Naive thymus-derived CD4-positive, alpha-beta T cell (primary cell): ENCODE measurements at regions of chr20 and their contacts with region 1.

Region 1: GRCh38 chr20:32484958-32485769 is 100.0 kb downstream of the NOL4L start:
- DNase-seq: peak; percentile 60 to 94 (median 91)
- ATAC-seq: peak; percentile 92
- H3K4me3 ChIP-seq: peak overlapping the region; percentile 55
- H3K4me3 Mint-ChIP-seq: peak overlapping the region; percentile 82 to 95 (median 92)
- H3K27ac ChIP-seq: peak overlapping the region; percentile 67
- H3K27ac Mint-ChIP-seq: peak overlapping the region; percentile 80 to 98 (median 88)
- H3K4me1 ChIP-seq: peaks cover 8 to 34% of the 10 kb centered on the region in 2 donors
- H3K4me1 Mint-ChIP-seq: peaks cover 20 to 58% (median 51%) of the 10 kb centered on the region in 7 donors
- H3K27me3 ChIP-seq: no peaks in the 10 kb centered on the region
- H3K27me3 Mint-ChIP-seq: peaks cover 0 to 5% (median 0%) of the 10 kb centered on the region in 5 donors

Region 2: DNA sequence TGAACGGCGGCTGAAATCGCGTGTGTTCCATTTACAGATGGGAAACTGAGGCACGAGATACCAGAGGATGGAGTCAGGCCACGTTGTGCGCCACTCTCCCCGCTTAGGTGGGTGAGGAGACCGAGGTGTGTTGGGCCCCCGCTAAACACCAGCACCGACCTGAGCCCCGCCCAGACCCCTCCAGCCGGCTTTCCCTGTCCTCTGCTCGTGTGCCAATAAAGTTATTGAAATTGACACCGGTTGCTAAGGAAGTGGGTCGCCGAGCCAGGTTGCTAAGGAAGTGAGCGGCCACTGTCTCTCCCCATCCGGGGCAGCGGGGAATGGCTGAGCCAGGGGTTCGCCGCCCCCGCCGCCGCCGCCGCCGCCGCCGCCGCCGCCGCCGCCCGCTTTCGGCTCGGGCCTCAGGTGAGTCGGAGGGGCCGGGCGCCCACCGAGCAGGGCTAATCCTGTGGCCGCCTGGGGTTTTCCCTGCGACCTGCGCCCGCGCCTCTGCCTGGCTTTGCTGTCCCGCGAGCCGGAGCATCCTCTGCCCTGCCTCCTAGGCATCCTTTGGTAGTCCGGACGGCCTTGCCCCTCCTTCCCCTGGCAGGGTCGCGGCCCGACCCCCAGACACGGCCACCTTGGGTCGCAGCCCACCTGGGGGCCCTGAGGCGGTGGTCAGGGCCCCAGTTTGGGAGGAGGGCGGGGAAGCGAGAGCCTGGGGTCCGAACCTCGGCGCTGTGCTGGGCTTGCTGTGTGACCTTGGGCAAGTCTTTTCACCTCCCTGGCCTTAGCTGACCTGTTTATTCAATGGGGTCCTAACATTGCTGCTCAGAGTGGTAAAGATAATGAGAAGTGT is 207.6 kb before region 1 on chr20 and contains the start of gene KIF3B:
- CTCF ChIA-PET with region 1: no interaction called
- POLR2A ChIA-PET with region 1: no interaction called
- intact Hi-C with region 1: loop called in 1 of 2 experiments (anchors 5 kb)
- DNase-seq: peak; percentile 62 to 87 (median 85)
- ATAC-seq: peak; percentile 95
- H3K4me3 ChIP-seq: peak within 1 kb of the TSS; percentile 82
- H3K4me3 Mint-ChIP-seq: peak within 1 kb of the TSS; percentile 85 to 93 (median 88)
- H3K27ac ChIP-seq: peak within 1 kb of the TSS; percentile 88
- H3K27ac Mint-ChIP-seq: peak within 1 kb of the TSS; percentile 78 to 97 (median 88)
- H3K4me1 ChIP-seq: peaks cover 9 to 13% of the 10 kb centered on the region in 2 donors
- H3K4me1 Mint-ChIP-seq: peaks cover 24 to 51% (median 39%) of the 10 kb centered on the region in 7 donors
- H3K27me3 ChIP-seq: no peaks in the 10 kb centered on the region
- H3K27me3 Mint-ChIP-seq: no peaks in the 10 kb centered on the region
- total RNA-seq, gene KIF3B: 9.3 to 19.5 (median 11.5) TPM

Region 3: DNA sequence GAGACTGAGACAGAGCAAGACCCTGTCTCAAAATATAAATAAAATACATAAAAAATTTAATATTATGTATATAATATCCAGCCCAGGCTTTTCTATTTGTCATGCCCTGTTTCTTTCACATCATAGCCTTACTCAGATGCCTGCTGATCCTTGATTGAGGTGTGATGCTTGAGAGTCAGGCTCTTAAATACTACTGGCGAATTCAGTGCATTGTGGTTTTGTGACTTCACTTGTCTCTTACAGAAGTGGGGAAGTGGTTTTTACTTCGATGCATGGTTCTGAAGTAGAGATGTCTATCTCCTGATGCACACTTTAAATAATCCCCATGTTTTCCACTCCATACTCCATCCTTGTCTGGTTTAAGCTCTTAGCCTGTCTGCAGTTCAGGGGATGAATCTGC is 97.9 kb before region 1 on chr20:
- CTCF ChIA-PET with region 1: interaction called, 3 read pairs
- POLR2A ChIA-PET with region 1: no interaction called
- intact Hi-C with region 1: loop called in 1 of 2 experiments (anchors 1 kb)
- DNase-seq: peak in 7 of 9 donors; percentile 65 to 86 (median 81)
- ATAC-seq: peak; percentile 96
- H3K4me3 ChIP-seq: no peak overlapping the region
- H3K4me3 Mint-ChIP-seq: peak overlapping the region; percentile 2 to 72 (median 48)
- H3K27ac ChIP-seq: peak overlapping the region; percentile 57
- H3K27ac Mint-ChIP-seq: peak overlapping the region; percentile 6 to 92 (median 63)
- H3K4me1 ChIP-seq: peaks cover 23 to 30% of the 10 kb centered on the region in 2 donors
- H3K4me1 Mint-ChIP-seq: peaks cover 47 to 87% (median 75%) of the 10 kb centered on the region in 7 donors
- H3K27me3 ChIP-seq: no peaks in the 10 kb centered on the region
- H3K27me3 Mint-ChIP-seq: no peaks in the 10 kb centered on the region

Region 4: DNA sequence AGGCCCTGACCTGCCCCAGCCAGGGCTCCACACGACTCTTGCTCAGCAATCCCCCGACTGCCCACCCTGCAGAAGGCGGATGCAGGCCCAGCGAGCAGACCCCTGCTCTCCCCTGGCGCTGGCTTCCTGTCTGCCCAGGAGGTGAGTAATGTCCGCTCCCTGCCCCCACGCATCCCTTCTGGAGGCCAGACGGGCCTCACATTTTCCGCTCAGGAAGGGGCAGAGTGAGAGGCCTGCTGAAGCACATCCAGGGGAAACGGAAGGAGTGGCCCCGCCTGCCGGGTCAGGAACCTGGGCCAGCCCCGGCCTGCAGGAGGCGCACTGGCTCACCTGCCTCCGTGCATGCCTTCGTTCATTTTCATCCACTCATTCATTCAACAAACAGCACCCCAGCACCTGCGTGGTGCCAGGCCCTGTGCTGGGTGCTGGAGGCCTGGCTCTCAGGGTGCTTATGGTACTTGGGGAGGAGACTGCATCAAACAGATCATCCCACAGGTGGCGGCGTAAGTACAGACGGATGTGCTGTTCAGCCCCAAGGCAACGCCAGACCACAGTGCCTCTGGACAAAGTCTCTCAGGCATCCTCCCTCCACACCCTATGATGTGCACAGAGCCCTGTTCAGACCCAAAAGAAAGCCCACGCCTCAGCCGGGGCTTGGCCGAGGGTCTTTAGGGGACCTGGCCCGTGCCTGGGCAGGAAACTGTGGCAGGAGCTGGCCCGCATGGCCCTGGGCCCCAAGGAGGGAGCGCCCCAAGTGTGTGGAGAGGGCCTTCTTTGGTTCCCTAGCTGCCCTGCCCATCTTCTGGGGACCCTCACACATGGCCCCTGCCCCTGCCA is 14.9 kb before region 1 on chr20:
- CTCF ChIA-PET with region 1: interaction called, 3 read pairs
- POLR2A ChIA-PET with region 1: interaction called, 3 read pairs
- intact Hi-C with region 1: loop called in 1 of 2 experiments (anchors 1 kb)
- DNase-seq: peak in 2 of 9 donors; percentile 24 to 31
- ATAC-seq: peak; percentile 58
- H3K4me3 ChIP-seq: no peak overlapping the region
- H3K4me3 Mint-ChIP-seq: peak overlapping the region in 1 of 10 donors; percentile 1
- H3K27ac ChIP-seq: peak overlapping the region; percentile 30
- H3K27ac Mint-ChIP-seq: peak overlapping the region in 8 of 9 donors; percentile 36 to 89 (median 79)
- H3K4me1 ChIP-seq: no peaks in the 10 kb centered on the region
- H3K4me1 Mint-ChIP-seq: peaks cover 4 to 23% (median 17%) of the 10 kb centered on the region in 7 donors
- H3K27me3 ChIP-seq: no peaks in the 10 kb centered on the region
- H3K27me3 Mint-ChIP-seq: no peaks in the 10 kb centered on the region

Region 5: GRCh38 chr20:32830437-32830836 is 345.3 kb after region 1 on chr20:
- CTCF ChIA-PET with region 1: no interaction called
- POLR2A ChIA-PET with region 1: no interaction called
- intact Hi-C with region 1: no loop called
- DNase-seq: peak in 2 of 9 donors; percentile 18 to 33
- ATAC-seq: peak; percentile 84
- H3K4me3 ChIP-seq: no peak overlapping the region
- H3K4me3 Mint-ChIP-seq: peak overlapping the region in 8 of 10 donors; percentile 12 to 70 (median 54)
- H3K27ac ChIP-seq: no peak overlapping the region
- H3K27ac Mint-ChIP-seq: peak overlapping the region; percentile 34 to 90 (median 85)
- H3K4me1 ChIP-seq: peaks cover 8 to 49% of the 10 kb centered on the region in 2 donors
- H3K4me1 Mint-ChIP-seq: peaks cover 35 to 87% (median 78%) of the 10 kb centered on the region in 7 donors
- H3K27me3 ChIP-seq: no peaks in the 10 kb centered on the region
- H3K27me3 Mint-ChIP-seq: no peaks in the 10 kb centered on the region